ENCODE measurements at regions of chr7 and their contacts with region 1.

Region 1: GRCh38 chr7:99438573-99439480 is at the starts of genes CPSF4 and PTCD1:
- DNase-seq: peak; percentile 93
- ATAC-seq: peak; percentile 96
- H3K4me3 ChIP-seq: peak within 1 kb of the TSS; percentile 41 to 97 (median 92)
- H3K4me3 Mint-ChIP-seq: peak within 1 kb of the TSS; percentile 97
- H3K27ac ChIP-seq: peak within 1 kb of the TSS; percentile 59 to 79
- H3K27ac Mint-ChIP-seq: peak within 1 kb of the TSS; percentile 95
- H3K4me1 ChIP-seq: peaks cover 12 to 28% of the 10 kb centered on the region in 2 donors
- H3K4me1 Mint-ChIP-seq: peaks cover 30% of the 10 kb centered on the region
- H3K27me3 ChIP-seq: no peaks in the 10 kb centered on the region
- H3K27me3 Mint-ChIP-seq: no peaks in the 10 kb centered on the region
- CTCF ChIP-seq: no peak
- total RNA-seq, gene CPSF4: 60.0 and 63.2 TPM in 2 replicates
- total RNA-seq, gene PTCD1: 10.2 and 14.8 TPM in 2 replicates

Region 2: GRCh38 chr7:99392677-99393354 is 46.0 kb before region 1 on chr7:
- CTCF ChIA-PET with region 1: no interaction called
- POLR2A ChIA-PET with region 1: interaction called, 8 read pairs
- intact Hi-C with region 1: loop called (anchors 1 kb)
- DNase-seq: peak; percentile 90
- ATAC-seq: peak; percentile 95
- H3K4me3 ChIP-seq: peak overlapping the region; percentile 16 to 59 (median 50)
- H3K4me3 Mint-ChIP-seq: peak overlapping the region; percentile 94
- H3K27ac ChIP-seq: peak overlapping the region; percentile 43 to 65
- H3K27ac Mint-ChIP-seq: peak overlapping the region; percentile 93
- H3K4me1 ChIP-seq: peaks cover 12 to 20% of the 10 kb centered on the region in 2 donors
- H3K4me1 Mint-ChIP-seq: peaks cover 22% of the 10 kb centered on the region
- H3K27me3 ChIP-seq: no peaks in the 10 kb centered on the region
- H3K27me3 Mint-ChIP-seq: no peaks in the 10 kb centered on the region
- CTCF ChIP-seq: no peak

Measured in B cell (primary cell).